HCT116 (cell line): ENCODE measurements at regions of chr3 and their contacts with region 1.

Region 1: GRCh38 chr3:133927540-133928066 is 31.9 kb upstream of the RAB6B start:
- DNase-seq: no peak
- ATAC-seq: peak; percentile 85
- H3K4me3 ChIP-seq: peak overlapping the region in 1 of 2 experiments; percentile 16; a peak in 1 of 4 replicates
- H3K27ac ChIP-seq: no peak overlapping the region
- H3K4me1 ChIP-seq: peaks cover 0 to 9% of the 10 kb centered on the region in 2 experiments; a peak in 2 of 4 replicates
- H3K27me3 ChIP-seq: no peaks in the 10 kb centered on the region; the same call in 1 of the 2 replicates
- CTCF ChIP-seq: peak; percentile 12 to 68 (median 62); a peak in 4 of 6 replicates
- POLR2A ChIP-seq: no peak
- RAD21 ChIP-seq: peak; percentile 61

Region 2: GRCh38 chr3:132730891-132731580 is 1196.6 kb before region 1 on chr3:
- CTCF ChIA-PET with region 1: no interaction called
- POLR2A ChIA-PET with region 1: no interaction called
- RAD21 ChIA-PET with region 1: no interaction called
- intact Hi-C with region 1: loop called (anchors 5 kb)
- DNase-seq: no peak
- ATAC-seq: peak; percentile 90
- H3K4me3 ChIP-seq: no peak overlapping the region
- H3K27ac ChIP-seq: no peak overlapping the region
- H3K4me1 ChIP-seq: peaks cover 0 to 7% of the 10 kb centered on the region in 2 experiments; a peak in 2 of 4 replicates
- H3K27me3 ChIP-seq: peaks cover 57% of the 10 kb centered on the region
- CTCF ChIP-seq: peak; percentile 14 to 53 (median 47); a peak in 4 of 6 replicates
- POLR2A ChIP-seq: no peak
- RAD21 ChIP-seq: peak; percentile 80

Region 3: DNA sequence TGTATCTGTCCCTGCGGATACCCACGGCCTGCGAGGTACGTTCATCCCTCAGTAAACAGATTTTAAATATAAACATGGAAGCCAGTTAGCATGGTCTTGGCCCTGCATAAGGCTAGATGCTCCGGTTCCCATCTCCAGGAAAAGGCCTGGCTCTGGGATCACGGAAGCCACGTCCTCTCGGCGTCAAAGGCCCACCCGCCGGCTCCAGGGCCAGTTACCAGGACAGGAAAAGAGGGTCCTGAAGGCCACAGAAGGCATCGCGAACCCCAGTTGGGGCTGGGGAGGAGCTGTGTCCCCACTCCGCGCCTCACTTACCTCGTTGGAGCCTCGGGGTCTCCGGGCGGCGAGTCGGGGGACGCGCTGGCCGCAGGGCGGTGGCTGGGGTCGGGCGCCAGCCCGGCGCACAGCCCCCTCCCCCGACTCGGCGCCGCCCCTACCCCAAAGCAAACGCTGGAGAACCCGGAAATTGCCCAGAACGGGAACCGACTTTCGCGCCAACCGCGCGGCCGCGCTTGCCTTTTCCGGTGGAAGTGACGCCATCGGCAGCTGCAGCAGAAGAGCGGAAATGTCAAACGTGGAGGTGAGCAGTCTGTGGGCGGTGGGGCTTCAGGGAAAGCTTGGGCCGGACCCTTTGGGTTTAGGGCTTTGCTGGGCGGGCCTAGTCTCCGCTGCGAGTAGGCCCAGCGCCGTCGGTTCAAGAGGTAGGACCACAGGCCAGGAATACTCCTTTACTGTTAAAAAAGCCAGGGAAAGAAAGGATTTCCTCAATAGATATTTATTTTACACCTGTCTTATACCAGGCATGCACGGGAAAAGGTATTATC is 265.9 kb before region 1 on chr3 and contains the start of gene TOPBP1:
- CTCF ChIA-PET with region 1: interaction called, 3 read pairs
- POLR2A ChIA-PET with region 1: no interaction called
- RAD21 ChIA-PET with region 1: no interaction called
- intact Hi-C with region 1: loop called (anchors 2 kb)
- DNase-seq: peak; percentile 48
- ATAC-seq: peak; percentile 84
- H3K4me3 ChIP-seq: peak within 1 kb of the TSS; percentile 80 to 92
- H3K27ac ChIP-seq: peak within 1 kb of the TSS; percentile 70
- H3K4me1 ChIP-seq: peaks cover 0 to 21% of the 10 kb centered on the region in 2 experiments; a peak in 3 of 4 replicates
- H3K27me3 ChIP-seq: no peaks in the 10 kb centered on the region
- CTCF ChIP-seq: no peak
- POLR2A ChIP-seq: peak; percentile 35
- RAD21 ChIP-seq: no peak
- total RNA-seq, gene TOPBP1: 42.2 TPM

Region 4: GRCh38 chr3:134039161-134039862 is 111.7 kb after region 1 on chr3:
- CTCF ChIA-PET with region 1: interaction called, 3 read pairs
- POLR2A ChIA-PET with region 1: no interaction called
- RAD21 ChIA-PET with region 1: no interaction called
- intact Hi-C with region 1: loop called (anchors 1 kb)
- DNase-seq: peak; percentile 8
- ATAC-seq: peak; percentile 90
- H3K4me3 ChIP-seq: no peak overlapping the region
- H3K27ac ChIP-seq: no peak overlapping the region
- H3K4me1 ChIP-seq: peaks cover 0 to 14% of the 10 kb centered on the region in 2 experiments; a peak in 2 of 4 replicates
- H3K27me3 ChIP-seq: no peaks in the 10 kb centered on the region
- CTCF ChIP-seq: peak; percentile 54 to 71 (median 57); a peak in 5 of 6 replicates
- POLR2A ChIP-seq: no peak
- RAD21 ChIP-seq: peak; percentile 70

Region 5: GRCh38 chr3:134299185-134299887 is 371.7 kb after region 1 on chr3:
- CTCF ChIA-PET with region 1: no interaction called
- POLR2A ChIA-PET with region 1: no interaction called
- RAD21 ChIA-PET with region 1: no interaction called
- intact Hi-C with region 1: loop called (anchors 2 kb)
- DNase-seq: no peak
- ATAC-seq: peak; percentile 47
- H3K4me3 ChIP-seq: no peak overlapping the region
- H3K27ac ChIP-seq: no peak overlapping the region
- H3K4me1 ChIP-seq: no peaks in the 10 kb centered on the region
- H3K27me3 ChIP-seq: no peaks in the 10 kb centered on the region
- CTCF ChIP-seq: peak in 1 of 3 experiments; percentile 29; a peak in 1 of 6 replicates
- POLR2A ChIP-seq: no peak
- RAD21 ChIP-seq: peak; percentile 62

Region 6: GRCh38 chr3:134618478-134619300 is 691.1 kb after region 1 on chr3:
- CTCF ChIA-PET with region 1: no interaction called
- POLR2A ChIA-PET with region 1: no interaction called
- RAD21 ChIA-PET with region 1: no interaction called
- intact Hi-C with region 1: no loop called
- DNase-seq: no peak
- ATAC-seq: no peak
- H3K4me3 ChIP-seq: no peak overlapping the region
- H3K27ac ChIP-seq: no peak overlapping the region
- H3K4me1 ChIP-seq: no peaks in the 10 kb centered on the region
- H3K27me3 ChIP-seq: no peaks in the 10 kb centered on the region; the same call in 1 of the 2 replicates
- CTCF ChIP-seq: no peak
- POLR2A ChIP-seq: no peak
- RAD21 ChIP-seq: no peak